ENCODE measurements at regions of chr11 and their contacts with region 1.

Region 1: GRCh38 chr11:133366099-133366498 is 166.2 kb downstream of the OPCML start:
- DNase-seq: no peak
- ATAC-seq: no peak
- H3K4me3 ChIP-seq: no peak overlapping the region
- H3K27ac ChIP-seq: no peak overlapping the region
- H3K4me1 ChIP-seq: no peaks in the 10 kb centered on the region
- H3K27me3 ChIP-seq: peaks cover 0 to 16% (median 4%) of the 10 kb centered on the region in 7 donors
- CTCF ChIP-seq: no peak

Region 2: DNA sequence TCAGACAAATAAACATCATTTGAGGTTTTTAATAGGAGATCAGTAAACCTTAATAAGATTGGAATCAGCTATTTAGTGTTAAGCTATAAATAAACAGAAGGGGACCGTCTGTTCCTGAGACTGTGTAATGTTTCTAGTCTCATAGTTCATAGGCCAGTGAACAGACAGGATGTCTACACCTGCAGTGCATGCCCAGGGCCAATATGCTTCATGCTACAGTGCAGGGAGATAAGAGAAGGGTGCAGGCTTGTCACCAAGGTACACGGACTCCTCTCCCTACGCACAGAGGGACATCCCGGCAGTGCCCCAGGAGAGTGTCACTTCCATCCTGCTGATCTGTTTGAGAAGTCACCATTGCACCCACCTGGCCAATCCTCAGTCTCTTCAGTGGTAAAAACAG is 17.6 kb after region 1 on chr11:
- intact Hi-C with region 1: loop called in 1 of 10 experiments (anchors 1 kb)
- DNase-seq: no peak
- ATAC-seq: no peak
- H3K4me3 ChIP-seq: no peak overlapping the region
- H3K27ac ChIP-seq: no peak overlapping the region
- H3K4me1 ChIP-seq: peaks cover 0 to 21% (median 5%) of the 10 kb centered on the region in 9 donors
- H3K27me3 ChIP-seq: peaks cover 0 to 16% (median 0%) of the 10 kb centered on the region in 7 donors
- CTCF ChIP-seq: no peak

Measured in heart right ventricle (tissue), 16 donors.